ENCODE measurements at regions of chr3 and their contacts with region 1.

Region 1: DNA sequence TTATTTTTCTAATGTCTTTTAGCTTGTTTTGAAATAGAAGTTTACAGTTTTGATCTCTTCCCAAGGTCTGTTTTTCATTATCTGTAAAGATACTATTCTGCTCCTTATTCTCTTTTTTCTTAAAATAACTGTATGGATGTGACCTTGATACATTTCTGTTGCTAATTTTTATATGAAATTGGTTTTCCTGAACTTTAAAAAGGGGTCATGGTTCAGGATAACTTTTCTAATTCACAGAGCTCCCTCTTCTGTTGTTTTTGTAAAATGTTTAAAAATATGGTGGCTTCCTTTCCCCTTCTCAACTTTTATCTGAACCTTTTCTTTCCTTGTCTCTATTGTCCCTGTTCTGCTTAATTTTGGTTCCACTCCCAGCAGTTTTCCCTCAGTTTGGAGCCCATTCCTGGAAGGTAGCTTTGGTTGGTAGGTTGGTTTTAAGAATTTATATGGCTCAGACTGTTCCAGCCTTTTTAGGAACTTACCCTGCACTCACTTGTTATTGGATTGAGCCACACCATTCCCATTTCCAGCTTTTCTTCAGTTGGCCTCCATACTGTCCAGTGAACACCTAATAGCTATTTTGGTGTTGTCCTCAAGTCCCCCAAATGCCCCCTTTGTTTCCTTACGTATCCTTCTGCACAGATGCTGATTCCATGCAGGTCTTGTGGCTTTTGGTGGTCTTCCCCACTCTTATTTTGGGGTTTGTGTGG is 70.3 kb downstream of the SLMAP start:
- DNase-seq: peak; percentile 26
- ATAC-seq: peak; percentile 33
- H3K4me3 ChIP-seq: no peak overlapping the region
- H3K27ac ChIP-seq: no peak overlapping the region
- H3K4me1 ChIP-seq: peaks cover 11% of the 10 kb centered on the region; the same call in 1 of the 2 replicates
- H3K27me3 ChIP-seq: no peaks in the 10 kb centered on the region
- CTCF ChIP-seq: peak; percentile 71

Region 2: GRCh38 chr3:57582474-57583168 is 243.8 kb before region 1 on chr3:
- CTCF ChIA-PET with region 1: no interaction called
- POLR2A ChIA-PET with region 1: no interaction called
- intact Hi-C with region 1: loop called (anchors 5 kb)
- DNase-seq: peak; percentile 83
- ATAC-seq: peak; percentile 64
- H3K4me3 ChIP-seq: no peak overlapping the region
- H3K27ac ChIP-seq: 0 out of 2 replicates have a peak overlapping the region, but pooled peaks have one; percentile 1
- H3K4me1 ChIP-seq: peaks cover 23% of the 10 kb centered on the region
- H3K27me3 ChIP-seq: no peaks in the 10 kb centered on the region
- CTCF ChIP-seq: peak; percentile 73

Region 3: GRCh38 chr3:57646723-57647122 is 179.7 kb before region 1 on chr3:
- CTCF ChIA-PET with region 1: no interaction called
- POLR2A ChIA-PET with region 1: no interaction called
- intact Hi-C with region 1: loop called (anchors 2 kb)
- DNase-seq: peak; percentile 49
- ATAC-seq: peak; percentile 97
- H3K4me3 ChIP-seq: no peak overlapping the region
- H3K27ac ChIP-seq: no peak overlapping the region
- H3K4me1 ChIP-seq: no peaks in the 10 kb centered on the region
- H3K27me3 ChIP-seq: no peaks in the 10 kb centered on the region
- CTCF ChIP-seq: peak; percentile 58

Measured in PC-3 (cell line).